Head of caudate nucleus (tissue), 42 donors: ENCODE measurements at regions of chr10 and their contacts with region 1.

Region 1: DNA sequence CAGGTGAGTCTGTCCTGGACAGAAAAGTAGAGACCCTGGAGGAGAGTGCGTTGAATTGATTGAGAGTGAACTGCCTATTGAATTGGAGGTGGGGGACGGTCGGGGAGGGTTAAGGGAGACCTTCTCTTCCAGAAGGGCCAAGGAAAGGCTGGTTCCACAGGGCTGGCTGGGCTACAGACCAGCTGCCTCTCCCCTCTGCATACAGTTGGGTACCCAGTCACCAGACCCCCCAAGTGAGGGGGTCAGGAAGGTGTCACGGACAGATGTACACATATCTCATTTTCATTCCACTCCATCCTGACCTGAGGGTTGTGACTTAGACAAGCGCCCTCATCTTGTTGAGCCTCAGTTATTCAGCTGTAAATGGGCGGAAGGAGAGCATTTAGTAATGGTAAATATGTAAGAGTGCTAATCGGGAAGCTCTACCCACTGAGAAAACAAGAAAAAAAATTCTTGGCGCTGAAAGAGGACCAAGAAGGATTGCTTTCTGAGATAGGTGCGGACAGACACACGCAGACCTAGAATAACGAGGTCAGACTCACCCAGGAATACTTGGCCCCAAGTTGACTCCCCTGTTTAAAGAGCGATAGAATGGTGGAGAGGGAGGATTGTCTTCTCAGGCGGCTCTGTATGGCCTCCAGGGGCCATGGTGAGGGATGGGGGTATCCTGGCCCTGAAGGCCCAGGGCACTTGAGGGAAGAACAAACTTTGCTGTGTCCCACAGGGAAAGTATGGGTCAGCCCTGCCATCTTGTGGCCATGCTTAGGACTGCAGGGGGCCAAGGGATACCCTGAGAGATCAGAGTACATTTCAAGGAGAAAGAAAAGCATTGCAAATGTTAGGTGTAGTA is 7.2 kb upstream of the MBL2 start:
- DNase-seq: peak; percentile 32 to 88 (median 76)

Region 2: GRCh38 chr10:52740913-52741675 is 38.7 kb before region 1 on chr10:
- intact Hi-C with region 1: loop called (anchors 5 kb)
- DNase-seq: peak in 40 of 42 donors; percentile 11 to 84 (median 62)

Region 3: GRCh38 chr10:53370347-53370746 is 590.6 kb after region 1 on chr10:
- intact Hi-C with region 1: no loop called
- DNase-seq: no peak